PC-3 (cell line): ENCODE measurements at regions of chr3 and their contacts with region 1.

Region 1: DNA sequence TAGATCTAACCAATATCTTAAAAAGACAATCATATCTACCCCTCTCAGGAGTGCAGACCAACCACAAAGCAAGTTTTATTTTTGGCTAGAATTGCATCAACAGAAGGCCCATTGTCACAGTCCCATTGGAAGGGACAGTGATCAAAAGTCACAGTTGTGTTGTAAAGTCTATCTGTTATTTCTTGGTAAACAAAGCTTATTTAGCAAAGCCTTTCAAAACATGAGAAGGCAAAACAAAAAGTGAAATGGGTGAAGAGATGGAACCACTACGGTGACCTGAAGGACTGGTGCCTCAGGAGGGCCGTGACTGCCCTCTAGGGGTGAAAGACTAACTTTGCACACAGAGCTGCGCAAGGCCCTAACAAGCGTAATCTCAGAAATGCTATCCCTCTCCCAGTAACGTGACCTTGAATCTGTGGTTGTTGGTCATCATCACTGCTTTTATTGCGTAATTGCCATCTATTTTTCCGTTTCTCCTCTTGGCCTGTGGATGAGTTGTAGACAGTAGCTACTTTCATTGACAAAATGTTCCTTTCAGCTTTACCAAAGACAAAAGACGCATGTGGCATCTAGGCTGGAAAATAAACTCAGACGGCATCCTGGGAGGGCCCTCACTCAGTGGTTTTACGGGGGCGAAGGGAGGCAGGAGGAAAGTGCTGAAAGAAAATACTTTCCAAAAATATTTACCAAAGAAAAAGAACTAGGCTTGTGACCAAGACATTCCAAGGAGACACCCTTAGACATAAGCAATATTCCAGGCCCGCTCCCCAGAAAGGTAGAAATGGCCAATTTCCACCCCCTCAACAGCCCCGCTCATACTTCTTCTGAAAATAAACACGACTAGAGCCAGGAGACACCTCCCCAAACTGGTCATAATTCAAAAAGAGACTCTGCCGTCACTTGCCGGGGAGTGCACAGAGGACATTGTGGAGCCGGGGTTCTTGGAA is 79.4 kb downstream of the FRMD4B start:
- DNase-seq: peak; percentile 64
- ATAC-seq: peak; percentile 87
- H3K4me3 ChIP-seq: no peak overlapping the region
- H3K27ac ChIP-seq: no peak overlapping the region
- H3K4me1 ChIP-seq: no peaks in the 10 kb centered on the region
- H3K27me3 ChIP-seq: no peaks in the 10 kb centered on the region
- CTCF ChIP-seq: peak; percentile 73

Region 2: DNA sequence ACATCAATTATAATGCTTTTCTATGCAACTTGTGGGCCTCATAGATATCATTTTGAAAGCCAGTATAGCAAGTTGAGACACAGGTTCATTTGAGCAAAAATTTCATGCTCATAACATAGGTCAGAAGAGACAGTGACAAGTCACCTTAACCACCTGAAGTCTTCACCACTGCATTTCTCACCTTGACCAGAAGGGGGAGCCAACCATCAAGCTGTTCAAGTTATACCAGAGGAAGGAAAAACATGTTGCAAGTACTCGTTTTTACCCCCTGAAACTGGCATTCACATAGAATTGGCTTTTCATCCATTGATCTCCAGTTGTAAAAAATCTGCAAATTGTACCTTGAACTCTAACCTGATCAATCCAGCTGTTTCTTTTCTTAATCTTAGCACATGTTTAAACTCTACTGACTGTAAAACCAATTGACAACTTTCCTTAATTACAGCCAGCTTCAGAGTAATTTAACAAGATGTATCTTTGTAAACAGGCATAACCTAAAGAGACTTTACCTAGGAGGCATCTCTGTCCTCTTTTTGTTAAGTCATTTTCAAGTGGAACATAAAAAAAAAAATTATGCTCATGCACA is 185.5 kb before region 1 on chr3:
- CTCF ChIA-PET with region 1: no interaction called
- POLR2A ChIA-PET with region 1: no interaction called
- intact Hi-C with region 1: loop called (anchors 1 kb)
- DNase-seq: peak; percentile 77
- ATAC-seq: peak; percentile 79
- H3K4me3 ChIP-seq: no peak overlapping the region
- H3K27ac ChIP-seq: no peak overlapping the region
- H3K4me1 ChIP-seq: peaks cover 11% of the 10 kb centered on the region
- H3K27me3 ChIP-seq: no peaks in the 10 kb centered on the region
- CTCF ChIP-seq: peak; percentile 73

Region 3: DNA sequence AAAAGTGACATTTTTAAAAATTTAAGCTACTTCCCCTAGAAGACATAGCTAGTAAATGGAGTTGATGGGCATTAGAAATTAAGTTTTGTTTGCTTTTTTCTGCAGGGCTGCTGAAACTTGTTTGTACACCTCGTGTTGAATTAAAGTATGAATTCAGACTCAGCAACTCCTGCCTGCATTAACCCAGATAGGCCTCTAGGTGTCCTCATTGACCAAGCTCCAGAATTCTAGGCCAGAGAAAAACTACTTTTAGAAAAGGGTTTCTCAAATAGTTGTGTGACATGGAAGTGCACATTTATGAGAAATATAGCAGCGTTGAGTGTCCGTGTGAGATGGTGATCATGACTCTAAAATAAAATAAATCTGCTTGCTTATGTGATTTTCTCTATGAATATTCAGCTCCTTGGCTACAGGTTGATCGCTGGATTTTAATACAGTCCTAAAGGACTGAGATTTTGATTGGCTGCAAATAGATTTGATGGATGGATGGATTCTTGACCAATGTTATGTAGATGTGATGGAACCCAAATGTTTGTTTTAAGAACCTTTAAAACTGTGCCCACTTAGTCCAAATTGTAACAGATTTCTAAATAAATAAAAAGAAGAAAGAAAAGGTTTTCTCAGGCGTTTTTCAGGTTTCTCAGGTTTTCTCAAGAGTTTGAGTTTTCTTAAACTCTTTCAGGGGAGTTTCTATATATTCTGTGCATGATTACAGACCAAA is 144.8 kb before region 1 on chr3:
- CTCF ChIA-PET with region 1: interaction called, 11 read pairs
- POLR2A ChIA-PET with region 1: interaction called, 3 read pairs
- intact Hi-C with region 1: loop called (anchors 1 kb)
- DNase-seq: peak; percentile 52
- ATAC-seq: peak; percentile 20; the same call in 1 of the 2 replicates
- H3K4me3 ChIP-seq: no peak overlapping the region
- H3K27ac ChIP-seq: no peak overlapping the region
- H3K4me1 ChIP-seq: no peaks in the 10 kb centered on the region
- H3K27me3 ChIP-seq: no peaks in the 10 kb centered on the region
- CTCF ChIP-seq: peak; percentile 80

Region 4: GRCh38 chr3:69200384-69201068 is 106.0 kb before region 1 on chr3:
- CTCF ChIA-PET with region 1: interaction called, 3 read pairs
- POLR2A ChIA-PET with region 1: no interaction called
- intact Hi-C with region 1: loop called (anchors 5 kb)
- DNase-seq: peak; percentile 83
- ATAC-seq: peak; percentile 68
- H3K4me3 ChIP-seq: peak overlapping the region; percentile 89
- H3K27ac ChIP-seq: peak overlapping the region; percentile 97
- H3K4me1 ChIP-seq: peaks cover 27% of the 10 kb centered on the region
- H3K27me3 ChIP-seq: no peaks in the 10 kb centered on the region
- CTCF ChIP-seq: no peak

Region 5: DNA sequence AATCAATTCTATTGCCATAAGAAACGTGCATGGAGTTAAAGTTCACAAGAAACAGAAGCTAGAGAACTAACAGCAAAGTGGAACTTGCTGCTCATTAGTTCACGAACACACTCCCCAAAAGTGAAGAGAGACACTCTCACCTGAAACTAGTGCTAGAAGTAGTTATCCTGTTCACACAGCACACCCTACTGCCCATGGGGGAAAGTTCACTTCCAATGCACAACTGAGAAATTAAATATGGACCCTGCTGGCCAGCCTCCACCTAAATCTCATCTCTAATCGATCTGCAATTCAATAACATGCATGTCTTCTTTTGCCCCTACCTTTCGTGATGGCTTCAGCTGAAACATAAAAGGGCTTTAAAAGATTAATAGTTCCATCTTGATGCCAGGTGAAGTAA is 118.7 kb after region 1 on chr3:
- CTCF ChIA-PET with region 1: no interaction called
- POLR2A ChIA-PET with region 1: no interaction called
- intact Hi-C with region 1: loop called (anchors 2 kb)
- DNase-seq: peak; percentile 51
- ATAC-seq: peak; percentile 54
- H3K4me3 ChIP-seq: no peak overlapping the region
- H3K27ac ChIP-seq: no peak overlapping the region
- H3K4me1 ChIP-seq: no peaks in the 10 kb centered on the region
- H3K27me3 ChIP-seq: no peaks in the 10 kb centered on the region
- CTCF ChIP-seq: peak; percentile 63

Region 6: GRCh38 chr3:69671082-69671952 is 364.8 kb after region 1 on chr3:
- CTCF ChIA-PET with region 1: no interaction called
- POLR2A ChIA-PET with region 1: no interaction called
- intact Hi-C with region 1: loop called (anchors 1 kb)
- DNase-seq: peak; percentile 64
- ATAC-seq: peak; percentile 33; the same call in 1 of the 2 replicates
- H3K4me3 ChIP-seq: no peak overlapping the region
- H3K27ac ChIP-seq: no peak overlapping the region
- H3K4me1 ChIP-seq: peaks cover 5% of the 10 kb centered on the region; the same call in 1 of the 2 replicates
- H3K27me3 ChIP-seq: no peaks in the 10 kb centered on the region
- CTCF ChIP-seq: peak; percentile 64